Heart right ventricle (tissue), 16 donors: ENCODE measurements at regions of chr11 and their contacts with region 1.

Region 1: DNA sequence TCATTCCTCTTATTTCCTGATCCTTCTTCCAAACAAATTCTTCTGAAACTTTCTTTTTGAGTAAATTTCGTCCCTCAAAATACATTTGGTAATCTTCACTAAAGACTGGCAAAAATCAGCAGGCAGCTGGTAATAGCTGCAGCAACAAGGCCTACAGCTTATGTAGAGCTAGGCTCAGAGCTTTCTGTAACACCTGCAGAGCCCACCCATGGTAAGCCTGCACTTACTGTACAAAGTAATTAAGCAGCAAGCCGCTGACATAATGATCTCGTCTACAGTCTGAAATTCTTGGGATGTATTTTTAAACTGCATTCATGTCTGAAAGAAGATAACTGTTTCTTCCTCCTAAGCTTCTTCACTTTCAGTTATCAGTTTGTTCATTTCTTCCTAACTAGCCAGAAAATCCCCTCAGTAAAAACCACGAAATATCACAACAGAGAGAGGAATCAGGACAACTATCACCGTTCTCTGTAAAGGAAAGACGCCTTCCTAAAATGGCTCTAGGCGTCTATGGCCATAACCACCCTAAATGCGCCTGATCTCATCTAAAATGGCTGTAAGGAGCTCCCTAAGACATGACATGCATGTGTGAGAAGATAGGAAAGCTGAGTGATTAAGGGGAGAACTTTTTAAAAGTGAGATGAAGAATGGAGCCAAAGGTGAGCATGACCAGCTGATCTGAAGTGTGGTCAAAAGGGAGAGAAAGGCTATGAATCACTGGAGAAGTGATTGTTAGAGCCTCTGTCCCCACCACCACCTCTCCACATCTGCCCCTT is 56.2 kb downstream of the DENND5A start:
- DNase-seq: no peak
- ATAC-seq: peak in 1 of 8 donors; percentile 14
- H3K4me3 ChIP-seq: no peak overlapping the region
- H3K27ac ChIP-seq: peak overlapping the region in 2 of 10 donors; percentile 41 to 48
- H3K4me1 ChIP-seq: peaks cover 6 to 92% (median 50%) of the 10 kb centered on the region in 9 donors
- H3K27me3 ChIP-seq: no peaks in the 10 kb centered on the region
- CTCF ChIP-seq: no peak

Region 2: DNA sequence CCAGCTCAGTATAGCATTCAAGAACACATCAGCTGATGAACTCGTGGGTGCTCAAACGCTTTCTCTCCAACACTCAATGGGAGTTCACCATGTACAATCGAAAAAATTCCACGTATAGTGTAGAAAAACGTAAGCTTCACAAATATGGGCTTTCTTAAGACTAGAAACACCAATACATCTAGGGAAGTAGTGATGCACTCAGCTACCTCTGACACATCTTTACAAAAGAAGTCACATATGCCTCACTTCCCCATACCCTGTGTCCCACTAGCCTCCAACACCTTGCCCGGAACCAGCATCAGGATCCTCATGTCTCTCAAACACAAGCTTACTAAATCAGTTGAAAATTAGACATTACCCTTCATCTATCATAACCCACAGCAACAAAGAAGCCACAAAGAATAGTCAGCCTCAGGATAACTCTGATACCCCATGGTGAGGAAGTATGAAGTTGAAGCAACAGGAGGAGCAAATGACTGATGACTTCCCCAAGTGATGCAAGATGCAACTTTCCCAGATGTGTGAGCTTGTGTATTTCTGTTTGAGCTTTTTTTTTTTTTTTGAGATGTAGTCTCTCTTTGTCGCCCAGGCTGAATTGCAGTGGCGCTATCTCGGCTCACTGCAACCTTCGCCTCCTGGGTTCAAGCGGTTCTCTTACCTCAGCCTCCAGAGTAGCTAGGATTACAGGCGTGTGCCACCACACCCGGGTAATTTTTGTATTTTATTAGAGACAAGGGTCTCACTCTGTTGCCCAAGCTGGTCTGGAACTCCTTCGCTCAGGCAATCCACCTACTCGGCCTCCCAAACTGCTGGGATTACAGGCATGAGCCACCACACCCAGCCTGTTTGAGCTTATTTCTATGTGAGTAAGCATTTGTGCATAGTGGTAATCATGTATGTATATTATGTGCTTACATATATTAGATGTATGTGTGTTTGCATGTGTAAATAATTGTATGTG is 64.7 kb after region 1 on chr11:
- intact Hi-C with region 1: loop called in 4 of 10 experiments (anchors 5 to 10 kb)
- DNase-seq: no peak
- ATAC-seq: peak in 2 of 8 donors; percentile 21 to 51
- H3K4me3 ChIP-seq: no peak overlapping the region
- H3K27ac ChIP-seq: peak overlapping the region in 6 of 10 donors; percentile 54 to 70 (median 66)
- H3K4me1 ChIP-seq: peaks cover 4 to 28% (median 21%) of the 10 kb centered on the region in 9 donors
- H3K27me3 ChIP-seq: no peaks in the 10 kb centered on the region
- CTCF ChIP-seq: no peak